GM12878 (cell line): ENCODE measurements at regions of chr5 and their contacts with region 1.

Region 1: DNA sequence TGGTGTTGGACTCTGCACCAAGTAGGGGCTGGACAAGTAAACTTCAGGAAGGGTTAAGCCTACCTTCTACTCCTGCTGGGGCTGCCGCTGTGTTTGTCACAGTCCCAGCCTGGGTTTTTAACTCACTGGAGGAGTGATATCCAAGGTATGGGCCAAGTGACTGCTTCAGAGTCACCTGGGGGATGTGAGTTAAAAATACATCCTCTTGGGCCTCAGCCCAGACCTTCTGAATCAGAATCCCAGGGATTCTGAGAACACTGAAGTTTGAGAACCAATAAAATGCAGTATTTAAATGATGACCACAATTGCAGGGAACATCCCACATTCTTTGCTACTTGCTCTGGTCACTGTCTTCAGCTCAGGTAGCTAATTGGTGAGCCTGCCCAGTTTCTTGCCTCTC is 95.1 kb upstream of the DNAH5 start:
- DNase-seq: no peak
- ATAC-seq: no peak
- H3K4me3 ChIP-seq: no peak overlapping the region
- H3K27ac ChIP-seq: no peak overlapping the region
- H3K4me1 ChIP-seq: no peaks in the 10 kb centered on the region
- H3K27me3 ChIP-seq: peaks cover 0 to 4% of the 10 kb centered on the region in 2 experiments; a peak in 2 of 4 replicates
- CTCF ChIP-seq: no peak
- EP300 ChIP-seq: no peak
- POLR2A ChIP-seq: no peak
- RAD21 ChIP-seq: no peak

Region 2: DNA sequence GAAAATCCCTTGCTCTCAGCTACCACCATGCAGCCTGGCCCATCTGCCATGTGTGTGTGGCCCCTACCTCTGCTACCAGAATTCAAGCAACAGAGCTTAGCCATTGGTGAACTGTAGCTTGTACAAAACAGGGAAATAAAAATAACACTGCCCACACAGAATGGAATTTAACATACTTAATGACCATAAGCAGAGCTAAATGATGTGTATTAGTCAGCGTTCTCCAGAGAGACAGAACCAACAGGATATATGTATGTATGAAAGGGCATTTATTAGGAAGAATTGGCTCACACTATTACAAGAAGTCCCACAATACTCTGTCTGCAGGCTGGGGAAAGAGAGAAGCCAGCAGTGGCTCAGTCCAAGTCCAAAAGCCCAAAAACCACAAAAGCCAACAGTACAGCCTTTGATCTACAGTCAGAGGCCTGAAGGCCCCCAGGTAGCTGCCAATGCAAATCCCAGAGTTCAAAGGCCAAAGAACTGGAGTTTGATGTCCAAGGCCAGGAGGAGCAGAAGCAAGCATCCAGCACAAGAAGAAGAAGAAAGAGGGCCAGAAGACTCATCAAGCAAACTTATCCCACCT is 413.9 kb before region 1 on chr5:
- CTCF ChIA-PET with region 1: no interaction called
- POLR2A ChIA-PET with region 1: no interaction called
- RAD21 ChIA-PET with region 1: no interaction called
- SMC1A ChIA-PET with region 1: no interaction called
- in situ Hi-C with region 1: no loop called
- intact Hi-C with region 1: no loop called
- DNase-seq: no peak
- ATAC-seq: no peak
- H3K4me3 ChIP-seq: no peak overlapping the region
- H3K27ac ChIP-seq: no peak overlapping the region
- H3K4me1 ChIP-seq: no peaks in the 10 kb centered on the region
- H3K27me3 ChIP-seq: no peaks in the 10 kb centered on the region
- CTCF ChIP-seq: no peak
- EP300 ChIP-seq: no peak
- POLR2A ChIP-seq: no peak
- RAD21 ChIP-seq: no peak

Region 3: DNA sequence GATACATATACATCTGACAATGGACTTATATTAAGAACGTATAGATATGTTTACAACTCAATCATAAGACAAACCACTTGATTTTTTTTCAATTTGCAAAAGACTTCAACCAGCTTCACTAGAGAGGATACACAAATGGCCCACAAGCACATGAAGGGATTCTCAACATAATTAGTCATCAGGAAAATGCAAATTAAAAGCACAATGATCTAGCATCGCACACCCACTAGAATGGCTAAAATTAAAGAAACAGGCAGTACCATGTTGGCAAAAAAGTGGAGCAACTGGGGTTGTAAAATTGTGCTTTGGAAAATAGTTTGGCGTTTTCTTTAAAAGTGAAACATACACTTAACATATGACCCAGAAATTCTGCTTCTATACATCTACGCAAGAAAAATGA is 23.6 kb after region 1 on chr5:
- CTCF ChIA-PET with region 1: no interaction called
- POLR2A ChIA-PET with region 1: no interaction called
- RAD21 ChIA-PET with region 1: no interaction called
- SMC1A ChIA-PET with region 1: interaction called, 4 read pairs
- in situ Hi-C with region 1: no loop called
- intact Hi-C with region 1: loop called (anchors 1 kb)
- DNase-seq: no peak
- ATAC-seq: no peak
- H3K4me3 ChIP-seq: no peak overlapping the region
- H3K27ac ChIP-seq: no peak overlapping the region
- H3K4me1 ChIP-seq: no peaks in the 10 kb centered on the region
- H3K27me3 ChIP-seq: no peaks in the 10 kb centered on the region
- CTCF ChIP-seq: no peak
- EP300 ChIP-seq: no peak
- POLR2A ChIP-seq: no peak
- RAD21 ChIP-seq: no peak